Caco-2 (cell line): ENCODE measurements at regions of chrX and their contacts with region 1.

Region 1: DNA sequence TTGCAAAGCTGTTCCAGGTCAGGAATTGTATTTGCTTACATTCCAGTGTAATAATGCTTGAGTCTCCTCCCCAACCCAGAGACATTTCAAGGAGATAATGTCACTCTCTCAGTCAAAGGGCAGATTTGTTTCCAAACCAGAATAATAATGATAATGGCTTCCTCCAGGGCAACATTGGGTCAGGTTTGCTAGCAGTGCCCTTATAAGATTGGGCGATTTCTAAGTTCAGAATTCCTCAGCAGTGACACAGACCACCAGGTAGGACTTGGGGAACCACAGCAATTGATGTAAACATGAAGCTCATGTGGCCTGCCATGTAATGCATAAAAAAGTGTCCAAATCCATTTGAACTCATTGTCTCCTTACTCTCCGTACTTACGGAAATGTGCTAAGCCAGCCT is 125.2 kb downstream of the BMP15 start:
- DNase-seq: peak in 1 of 2 experiments; percentile 30
- H3K4me3 ChIP-seq: no peak overlapping the region
- H3K4me3 Mint-ChIP-seq: no peak overlapping the region
- H3K27ac Mint-ChIP-seq: peak overlapping the region; percentile 53
- H3K4me1 ChIP-seq: peaks cover 3% of the 10 kb centered on the region; the same call in 1 of the 2 replicates
- H3K4me1 Mint-ChIP-seq: no peaks in the 10 kb centered on the region
- H3K27me3 ChIP-seq: no peaks in the 10 kb centered on the region
- H3K27me3 Mint-ChIP-seq: no peaks in the 10 kb centered on the region
- CTCF ChIP-seq: no peak

Region 2: DNA sequence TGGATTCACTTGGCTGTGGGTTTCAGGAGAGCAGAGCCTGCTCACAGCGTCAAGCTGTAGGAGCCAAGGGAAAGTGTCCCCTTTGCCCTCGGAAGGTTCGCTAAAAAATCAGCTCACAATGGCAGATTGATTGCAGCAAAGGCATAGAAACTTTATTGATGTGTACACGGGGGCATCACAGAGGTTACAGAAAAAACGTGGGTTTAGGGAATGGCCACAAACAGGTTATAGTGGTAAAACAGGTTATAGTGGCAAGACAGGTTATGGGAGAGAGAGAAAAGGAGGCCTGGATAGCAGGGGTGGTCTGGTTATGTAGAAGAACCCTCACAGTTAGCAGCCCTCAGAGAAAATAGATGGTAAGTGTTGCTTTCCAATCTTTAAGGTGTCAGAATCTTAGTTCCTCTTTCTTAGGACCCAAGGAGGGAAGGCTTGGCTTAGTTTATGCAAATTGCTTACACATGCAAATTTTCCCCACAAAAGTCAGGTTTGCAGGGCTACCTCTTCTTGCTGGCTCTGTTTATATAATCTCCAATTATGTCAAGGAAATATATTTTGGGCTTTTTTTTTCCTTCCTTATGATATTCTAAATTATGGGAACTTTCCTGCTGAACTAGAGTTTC is 11.6 kb before region 1 on chrX:
- CTCF ChIA-PET with region 1: no interaction called
- POLR2A ChIA-PET with region 1: no interaction called
- intact Hi-C with region 1: loop called (anchors 1 kb)
- DNase-seq: peak in 1 of 2 experiments; percentile 16
- H3K4me3 ChIP-seq: no peak overlapping the region
- H3K4me3 Mint-ChIP-seq: peak overlapping the region; percentile 23
- H3K27ac Mint-ChIP-seq: no peak overlapping the region
- H3K4me1 ChIP-seq: no peaks in the 10 kb centered on the region
- H3K4me1 Mint-ChIP-seq: peaks cover 9% of the 10 kb centered on the region
- H3K27me3 ChIP-seq: no peaks in the 10 kb centered on the region
- H3K27me3 Mint-ChIP-seq: no peaks in the 10 kb centered on the region
- CTCF ChIP-seq: no peak

Region 3: DNA sequence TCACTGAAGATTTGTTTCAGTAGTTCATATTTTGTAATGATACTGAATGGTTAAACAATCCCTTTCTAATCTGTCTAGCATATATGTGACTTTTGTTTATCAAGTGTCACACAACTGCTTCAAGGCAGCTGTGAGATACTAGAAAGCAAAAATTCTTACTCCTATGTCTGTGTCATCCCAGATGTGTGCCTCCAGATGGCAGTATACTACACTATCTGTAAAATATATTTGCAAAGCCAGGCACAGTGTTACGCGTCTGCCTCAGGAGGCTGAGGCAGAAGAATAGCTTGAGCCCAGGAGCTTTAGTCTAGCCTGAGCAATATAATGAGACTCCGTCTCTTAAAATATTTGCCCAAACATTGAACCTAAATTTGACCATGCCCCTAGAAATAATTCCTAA is 300.8 kb after region 1 on chrX:
- CTCF ChIA-PET with region 1: no interaction called
- POLR2A ChIA-PET with region 1: no interaction called
- intact Hi-C with region 1: no loop called
- DNase-seq: peak; percentile 19 to 27
- H3K4me3 ChIP-seq: no peak overlapping the region
- H3K4me3 Mint-ChIP-seq: no peak overlapping the region
- H3K27ac Mint-ChIP-seq: no peak overlapping the region
- H3K4me1 ChIP-seq: no peaks in the 10 kb centered on the region
- H3K4me1 Mint-ChIP-seq: no peaks in the 10 kb centered on the region
- H3K27me3 ChIP-seq: no peaks in the 10 kb centered on the region
- H3K27me3 Mint-ChIP-seq: peaks cover 7% of the 10 kb centered on the region
- CTCF ChIP-seq: peak; percentile 11 to 43